ENCODE measurements at regions of chr20 and their contacts with region 1.

Region 1: DNA sequence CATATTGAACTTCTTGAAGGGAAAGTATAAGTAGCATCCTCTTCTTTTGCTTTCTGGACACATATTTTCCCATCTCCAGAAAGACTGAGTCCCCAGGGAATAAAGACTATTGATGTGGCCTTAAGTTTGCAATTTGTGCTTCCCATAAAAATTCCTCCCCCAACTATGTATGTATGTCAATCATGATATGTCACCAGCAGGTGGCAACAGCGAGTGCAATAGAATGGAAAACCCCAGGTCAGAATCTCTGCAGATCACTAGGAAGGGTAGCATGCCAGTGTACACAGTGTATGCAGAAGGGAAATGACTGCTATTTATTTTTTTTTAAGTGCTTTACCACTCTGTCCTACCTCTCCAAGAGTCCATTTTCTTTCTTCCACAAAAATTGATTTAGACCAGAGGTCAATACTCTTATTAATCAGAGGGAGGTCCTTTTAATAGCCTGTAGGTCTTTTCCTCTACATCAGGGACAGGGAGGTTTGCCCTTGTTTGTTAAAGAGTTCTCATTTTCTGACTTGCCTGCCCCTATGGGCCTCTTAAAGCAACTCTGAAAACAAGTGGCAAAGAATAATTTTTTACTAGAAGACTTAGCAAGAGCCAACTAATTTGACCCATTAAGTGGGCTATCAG is 61.4 kb downstream of the BMP2 start:
- DNase-seq: peak; percentile 85
- H3K4me3 ChIP-seq: no peak overlapping the region
- H3K27ac ChIP-seq: no peak overlapping the region
- H3K4me1 ChIP-seq: no peaks in the 10 kb centered on the region
- H3K27me3 ChIP-seq: no peaks in the 10 kb centered on the region
- CTCF ChIP-seq: peak; percentile 56 to 59
- POLR2A ChIP-seq: no peak

Region 2: DNA sequence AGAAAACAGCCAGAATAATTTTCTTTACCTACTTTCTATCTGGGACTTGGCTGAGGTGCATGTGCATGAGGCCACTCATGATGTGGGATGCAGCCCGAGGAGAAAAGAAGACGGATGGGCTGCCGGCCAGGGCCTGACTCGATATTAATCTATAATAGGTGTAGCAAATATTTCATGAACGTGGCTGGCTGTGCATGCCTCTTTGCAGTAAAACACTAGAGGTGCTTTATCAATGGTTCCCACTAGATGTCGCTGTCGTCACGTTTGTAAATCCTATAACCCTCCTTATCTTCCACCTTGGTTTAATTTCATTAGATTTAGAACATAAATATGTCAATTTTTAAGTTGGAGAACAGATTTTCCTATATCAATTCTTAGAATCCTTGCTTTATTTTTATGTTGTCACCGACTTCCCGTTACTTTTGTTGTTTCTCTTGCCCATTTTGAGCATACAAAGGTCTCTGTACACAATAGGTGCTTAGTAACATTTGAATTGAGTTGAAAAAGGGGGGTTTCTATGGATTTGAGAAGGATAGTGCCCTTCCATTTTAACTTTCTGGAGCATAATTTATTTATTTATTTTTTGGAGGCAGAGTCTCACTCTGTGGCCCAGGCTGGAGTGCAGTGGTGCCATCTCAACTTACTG is 686.4 kb before region 1 on chr20:
- CTCF ChIA-PET with region 1: no interaction called
- POLR2A ChIA-PET with region 1: no interaction called
- dilution Hi-C with region 1: no loop called
- intact Hi-C with region 1: loop called (anchors 10 kb)
- DNase-seq: peak; percentile 64
- H3K4me3 ChIP-seq: no peak overlapping the region
- H3K27ac ChIP-seq: no peak overlapping the region
- H3K4me1 ChIP-seq: no peaks in the 10 kb centered on the region
- H3K27me3 ChIP-seq: peaks cover 0 to 10% of the 10 kb centered on the region in 2 experiments
- CTCF ChIP-seq: peak; percentile 58 to 68
- POLR2A ChIP-seq: no peak

Region 3: DNA sequence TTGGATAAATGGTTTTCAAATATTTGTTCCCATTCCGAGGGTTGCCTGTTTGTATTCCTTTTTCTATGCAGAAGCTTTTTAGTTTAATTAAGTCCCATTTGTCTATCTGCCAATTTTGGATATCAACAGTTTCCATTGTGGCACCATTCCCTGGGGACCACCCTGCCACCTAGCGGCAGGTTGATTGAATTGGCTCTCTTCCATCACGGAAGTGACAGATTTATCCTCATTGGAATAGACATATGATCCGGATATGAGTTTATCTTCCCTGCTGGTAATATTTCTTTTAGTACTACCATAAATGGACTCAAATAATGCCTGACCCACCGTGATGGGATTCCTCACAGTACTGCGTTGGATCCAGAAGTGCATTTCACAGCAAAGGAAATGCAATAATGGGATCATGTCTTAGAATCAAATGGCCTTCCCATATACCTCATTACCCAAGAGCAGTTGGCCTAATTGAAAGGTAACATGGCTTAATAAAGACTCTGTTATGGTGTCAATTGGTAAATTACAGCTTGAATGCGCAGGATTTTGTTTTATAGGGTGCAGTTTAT is 265.6 kb after region 1 on chr20:
- CTCF ChIA-PET with region 1: no interaction called
- POLR2A ChIA-PET with region 1: no interaction called
- dilution Hi-C with region 1: no loop called
- intact Hi-C with region 1: loop called (anchors 2 kb)
- DNase-seq: peak; percentile 46
- H3K4me3 ChIP-seq: no peak overlapping the region
- H3K27ac ChIP-seq: no peak overlapping the region
- H3K4me1 ChIP-seq: peaks cover 6% of the 10 kb centered on the region
- H3K27me3 ChIP-seq: no peaks in the 10 kb centered on the region
- CTCF ChIP-seq: peak; percentile 52 to 60
- POLR2A ChIP-seq: no peak

Region 4: DNA sequence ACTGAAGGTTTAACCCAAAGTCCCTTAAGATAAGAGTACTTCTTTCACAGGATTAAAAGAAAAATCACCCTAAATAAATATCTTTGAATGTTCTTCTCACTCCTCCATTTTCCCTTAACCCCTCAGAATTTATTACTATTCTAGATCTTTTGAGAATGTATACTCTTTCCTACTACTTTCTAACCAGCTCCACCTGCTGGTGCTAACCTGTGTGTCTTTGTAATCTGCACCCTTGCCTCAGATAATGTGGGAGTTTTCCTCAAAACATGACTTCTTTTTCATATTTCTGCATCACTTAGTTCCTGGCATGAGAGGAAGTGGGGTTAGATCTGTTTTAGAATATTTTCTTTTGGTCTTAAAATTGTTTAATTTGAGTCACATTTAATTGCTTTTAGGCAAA is 332.8 kb after region 1 on chr20:
- CTCF ChIA-PET with region 1: interaction called, 4 read pairs
- POLR2A ChIA-PET with region 1: no interaction called
- dilution Hi-C with region 1: no loop called
- intact Hi-C with region 1: loop called (anchors 2 kb)
- DNase-seq: peak; percentile 36
- H3K4me3 ChIP-seq: no peak overlapping the region
- H3K27ac ChIP-seq: no peak overlapping the region
- H3K4me1 ChIP-seq: peaks cover 16% of the 10 kb centered on the region
- H3K27me3 ChIP-seq: no peaks in the 10 kb centered on the region
- CTCF ChIP-seq: peak in 1 of 2 donors; percentile 35
- POLR2A ChIP-seq: no peak

Measured in endothelial cell of umbilical vein (primary cell).